ENCODE measurements at regions of chr15 and their contacts with region 1.

Region 1: GRCh38 chr15:60526127-60526625 is 47.2 kb upstream of the ICE2 start:
- DNase-seq: peak in 4 of 9 experiments; percentile 33 to 76 (median 60)
- ATAC-seq: peak; percentile 55
- H3K4me3 ChIP-seq: no peak overlapping the region
- H3K4me3 Mint-ChIP-seq: no peak overlapping the region
- H3K27ac ChIP-seq: peak overlapping the region in 1 of 2 experiments; percentile 67
- H3K27ac Mint-ChIP-seq: peak overlapping the region; percentile 94
- H3K4me1 ChIP-seq: peaks cover 28% of the 10 kb centered on the region
- H3K4me1 Mint-ChIP-seq: peaks cover 76% of the 10 kb centered on the region
- H3K27me3 ChIP-seq: no peaks in the 10 kb centered on the region
- H3K27me3 Mint-ChIP-seq: no peaks in the 10 kb centered on the region
- CTCF ChIP-seq: no peak

Region 2: DNA sequence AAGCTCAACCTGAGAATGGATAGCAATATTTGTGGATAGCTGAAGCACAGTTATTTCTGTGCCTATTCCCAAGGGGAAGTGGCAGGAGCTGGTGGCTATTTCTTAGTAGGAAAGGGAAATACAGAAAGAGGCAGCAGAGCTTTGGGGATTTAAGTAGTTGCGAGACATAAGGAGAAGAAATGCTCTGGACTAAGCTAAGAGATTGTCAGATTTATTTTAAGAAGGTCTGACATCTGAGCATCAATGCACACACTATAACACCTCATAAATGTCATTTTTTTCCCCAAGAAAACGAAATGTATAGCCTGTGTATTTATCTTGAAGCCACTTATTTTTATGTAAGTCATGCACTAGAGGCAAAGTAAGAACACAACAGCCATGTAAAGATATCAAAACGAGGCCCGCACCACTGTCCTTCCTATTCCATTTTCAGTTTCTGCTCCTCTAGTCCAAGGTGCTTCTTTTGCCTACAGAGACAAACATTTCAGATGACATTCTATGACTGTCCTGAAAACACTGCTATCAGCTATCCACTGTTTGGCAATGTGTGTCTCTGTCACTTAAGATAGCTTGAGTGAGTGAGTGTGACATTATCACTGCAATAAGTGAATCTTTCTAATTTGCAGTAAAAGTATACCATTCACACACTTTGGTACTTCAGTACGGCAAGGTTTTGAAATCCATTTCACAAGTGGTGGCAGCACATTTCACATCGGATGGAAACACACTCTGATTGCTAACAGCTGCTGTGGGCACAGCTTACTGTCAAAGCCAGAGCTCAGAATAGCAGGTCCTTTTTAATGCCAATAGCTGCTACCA is 15.5 kb after region 1 on chr15:
- CTCF ChIA-PET with region 1: interaction called, 50 read pairs
- POLR2A ChIA-PET with region 1: interaction called, 5 read pairs
- intact Hi-C with region 1: loop called in 1 of 2 experiments (anchors 2 kb)
- DNase-seq: peak in 3 of 9 experiments; percentile 34 to 57 (median 44)
- ATAC-seq: no peak
- H3K4me3 ChIP-seq: no peak overlapping the region
- H3K4me3 Mint-ChIP-seq: peak overlapping the region; percentile 35
- H3K27ac ChIP-seq: peak overlapping the region in 1 of 2 experiments; percentile 50
- H3K27ac Mint-ChIP-seq: peak overlapping the region; percentile 70
- H3K4me1 ChIP-seq: peaks cover 93% of the 10 kb centered on the region
- H3K4me1 Mint-ChIP-seq: peaks cover 94% of the 10 kb centered on the region
- H3K27me3 ChIP-seq: no peaks in the 10 kb centered on the region
- H3K27me3 Mint-ChIP-seq: no peaks in the 10 kb centered on the region
- CTCF ChIP-seq: no peak

Region 3: GRCh38 chr15:60548101-60548500 is 21.9 kb after region 1 on chr15:
- CTCF ChIA-PET with region 1: interaction called, 50 read pairs
- POLR2A ChIA-PET with region 1: interaction called, 6 read pairs
- intact Hi-C with region 1: loop called in 1 of 2 experiments (anchors 2 kb)
- DNase-seq: peak in 5 of 9 experiments; percentile 38 to 71 (median 48)
- ATAC-seq: peak; percentile 67
- H3K4me3 ChIP-seq: peak overlapping the region in 1 of 2 experiments; percentile 0
- H3K4me3 Mint-ChIP-seq: peak overlapping the region; percentile 57
- H3K27ac ChIP-seq: peak overlapping the region in 1 of 2 experiments; percentile 84
- H3K27ac Mint-ChIP-seq: peak overlapping the region; percentile 89
- H3K4me1 ChIP-seq: peaks cover 90% of the 10 kb centered on the region
- H3K4me1 Mint-ChIP-seq: peaks cover 92% of the 10 kb centered on the region
- H3K27me3 ChIP-seq: no peaks in the 10 kb centered on the region
- H3K27me3 Mint-ChIP-seq: no peaks in the 10 kb centered on the region
- CTCF ChIP-seq: no peak

Region 4: GRCh38 chr15:61811952-61812351 is 1285.8 kb after region 1 on chr15:
- CTCF ChIA-PET with region 1: no interaction called
- POLR2A ChIA-PET with region 1: no interaction called
- intact Hi-C with region 1: no loop called
- DNase-seq: no peak
- ATAC-seq: no peak
- H3K4me3 ChIP-seq: no peak overlapping the region
- H3K4me3 Mint-ChIP-seq: no peak overlapping the region
- H3K27ac ChIP-seq: no peak overlapping the region
- H3K27ac Mint-ChIP-seq: no peak overlapping the region
- H3K4me1 ChIP-seq: no peaks in the 10 kb centered on the region
- H3K4me1 Mint-ChIP-seq: no peaks in the 10 kb centered on the region
- H3K27me3 ChIP-seq: no peaks in the 10 kb centered on the region
- H3K27me3 Mint-ChIP-seq: peaks cover 13% of the 10 kb centered on the region
- CTCF ChIP-seq: no peak

Measured in CD8-positive, alpha-beta T cell (primary cell).